Right ventricle myocardium superior (tissue), 1 donor: ENCODE measurements at regions of chr15 and their contacts with region 1.

Region 1: DNA sequence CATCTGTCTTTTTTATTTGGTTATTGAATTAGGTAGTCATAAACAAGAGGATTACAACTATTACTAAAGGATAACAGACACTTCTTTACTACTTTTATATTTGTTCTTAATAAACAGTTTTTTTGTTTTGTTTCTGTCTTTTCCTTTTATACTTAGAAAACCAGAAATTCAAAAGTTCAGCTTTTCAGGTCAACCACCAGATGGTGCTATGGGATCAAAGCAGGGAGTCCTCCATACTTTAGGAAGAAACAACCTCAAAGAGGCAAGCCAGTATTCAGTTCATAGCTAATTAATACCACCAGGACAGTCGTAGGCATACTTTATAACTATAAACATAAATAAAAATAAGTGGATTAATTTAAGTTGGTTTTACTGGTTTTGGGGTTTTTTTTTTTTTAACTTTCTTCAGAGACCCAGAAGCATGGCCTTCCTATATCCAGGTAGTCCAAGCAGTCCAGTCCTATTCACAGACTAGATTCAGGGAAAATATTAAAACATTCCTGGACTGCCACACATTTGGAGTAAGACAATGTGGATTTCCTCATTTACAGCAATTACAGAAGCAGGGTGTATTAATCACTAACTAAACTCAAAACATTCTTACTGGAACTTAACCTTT is 16.0 kb upstream of the EID1 start:
- DNase-seq: no peak
- ATAC-seq: peak; percentile 82

Region 2: GRCh38 chr15:49148298-49148697 is 286.4 kb after region 1 on chr15:
- intact Hi-C with region 1: loop called (anchors 2 kb)
- DNase-seq: no peak
- ATAC-seq: no peak

Region 3: DNA sequence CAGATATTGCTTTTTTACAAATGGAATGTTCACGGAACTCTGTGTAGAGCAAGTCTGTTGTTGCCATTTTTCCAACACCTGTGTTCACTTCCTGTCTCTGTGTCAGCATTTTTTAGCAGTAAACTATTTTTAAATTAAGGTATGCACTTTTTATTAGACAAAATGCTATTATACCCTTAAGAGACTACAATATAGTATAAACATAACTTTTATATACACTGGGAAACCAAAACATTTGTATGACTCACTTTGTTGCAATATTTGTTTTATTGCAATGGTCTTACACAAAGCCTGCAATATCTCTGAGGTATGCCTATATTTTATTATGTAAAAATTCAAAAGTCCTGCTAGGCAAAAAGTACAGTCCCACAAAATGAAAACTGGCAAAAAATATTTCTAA is 521.3 kb after region 1 on chr15:
- intact Hi-C with region 1: no loop called
- DNase-seq: no peak
- ATAC-seq: no peak

Region 4: DNA sequence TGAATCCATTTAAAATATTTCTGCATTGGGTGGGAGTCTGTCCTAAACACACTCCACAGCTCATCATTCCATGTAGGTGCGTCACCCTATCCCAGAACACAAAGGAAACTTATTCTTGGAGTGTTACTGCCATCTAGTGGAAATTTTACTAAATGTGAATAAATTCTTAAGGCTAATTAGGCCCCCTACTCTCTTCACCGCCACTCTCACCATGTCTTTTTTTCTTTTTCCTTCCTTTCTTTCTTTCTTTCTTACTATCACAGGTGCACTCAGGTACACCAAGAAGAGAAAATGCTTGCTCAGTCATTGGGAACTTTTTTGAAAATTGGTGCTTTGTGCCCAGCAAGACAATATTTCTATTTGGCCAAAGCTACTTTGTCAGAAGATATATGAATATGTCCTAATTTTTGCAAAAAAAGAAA is 1283.5 kb after region 1 on chr15:
- intact Hi-C with region 1: loop called (anchors 5 kb)
- DNase-seq: no peak
- ATAC-seq: peak; percentile 83